Activated B cell treated with CpG ODN at 0.5 μM for 24 hours (primary cell): ENCODE measurements at regions of chr5 and their contacts with region 1.

Region 1: DNA sequence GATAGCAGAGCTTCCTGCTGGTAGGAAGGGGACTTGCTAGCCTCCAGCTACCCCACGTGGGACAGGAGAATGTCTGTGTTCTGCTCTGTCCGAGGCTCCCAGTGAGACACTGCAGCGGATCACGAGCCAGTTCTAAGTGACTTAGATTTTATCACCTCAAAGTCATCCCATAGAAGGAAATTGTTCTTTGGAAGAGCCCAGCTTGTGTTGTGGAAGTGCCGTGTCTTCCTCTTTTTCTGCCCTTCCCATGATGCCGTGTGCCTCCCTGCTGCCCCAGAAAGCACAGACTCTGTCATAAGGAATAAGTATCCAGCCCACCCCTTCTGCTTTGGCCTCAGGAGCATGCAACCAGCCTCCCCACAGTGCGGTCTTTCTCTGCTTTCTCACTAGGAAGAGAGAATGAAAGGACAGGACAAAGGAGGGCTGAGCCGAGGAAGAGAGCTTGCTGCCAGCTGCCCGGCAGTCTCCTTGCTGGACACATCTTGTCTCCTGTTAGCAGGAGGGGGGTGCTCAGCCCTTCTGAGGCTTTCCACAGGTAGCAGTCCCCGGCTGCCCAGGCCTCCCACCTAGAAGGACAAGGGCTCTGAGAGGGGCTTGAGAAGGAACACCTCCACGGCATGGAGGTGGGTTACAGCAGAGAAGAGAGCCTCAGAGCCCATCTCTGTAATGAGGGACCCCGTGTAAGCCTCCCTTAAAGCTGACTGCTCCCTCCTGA is 35.7 kb downstream of the RUFY1 start:
- DNase-seq: no peak
- ATAC-seq: no peak
- H3K4me3 Mint-ChIP-seq: no peak overlapping the region
- H3K27ac Mint-ChIP-seq: no peak overlapping the region
- H3K4me1 Mint-ChIP-seq: no peaks in the 10 kb centered on the region
- H3K27me3 Mint-ChIP-seq: no peaks in the 10 kb centered on the region
- CTCF ChIP-seq: no peak

Region 2: GRCh38 chr5:179475208-179475751 is 110.8 kb before region 1 on chr5:
- CTCF ChIA-PET with region 1: no interaction called
- POLR2A ChIA-PET with region 1: no interaction called
- intact Hi-C with region 1: no loop called
- DNase-seq: no peak
- ATAC-seq: no peak
- H3K4me3 Mint-ChIP-seq: no peak overlapping the region
- H3K27ac Mint-ChIP-seq: no peak overlapping the region
- H3K4me1 Mint-ChIP-seq: no peaks in the 10 kb centered on the region
- H3K27me3 Mint-ChIP-seq: peaks cover 6% of the 10 kb centered on the region
- CTCF ChIP-seq: no peak

Region 3: DNA sequence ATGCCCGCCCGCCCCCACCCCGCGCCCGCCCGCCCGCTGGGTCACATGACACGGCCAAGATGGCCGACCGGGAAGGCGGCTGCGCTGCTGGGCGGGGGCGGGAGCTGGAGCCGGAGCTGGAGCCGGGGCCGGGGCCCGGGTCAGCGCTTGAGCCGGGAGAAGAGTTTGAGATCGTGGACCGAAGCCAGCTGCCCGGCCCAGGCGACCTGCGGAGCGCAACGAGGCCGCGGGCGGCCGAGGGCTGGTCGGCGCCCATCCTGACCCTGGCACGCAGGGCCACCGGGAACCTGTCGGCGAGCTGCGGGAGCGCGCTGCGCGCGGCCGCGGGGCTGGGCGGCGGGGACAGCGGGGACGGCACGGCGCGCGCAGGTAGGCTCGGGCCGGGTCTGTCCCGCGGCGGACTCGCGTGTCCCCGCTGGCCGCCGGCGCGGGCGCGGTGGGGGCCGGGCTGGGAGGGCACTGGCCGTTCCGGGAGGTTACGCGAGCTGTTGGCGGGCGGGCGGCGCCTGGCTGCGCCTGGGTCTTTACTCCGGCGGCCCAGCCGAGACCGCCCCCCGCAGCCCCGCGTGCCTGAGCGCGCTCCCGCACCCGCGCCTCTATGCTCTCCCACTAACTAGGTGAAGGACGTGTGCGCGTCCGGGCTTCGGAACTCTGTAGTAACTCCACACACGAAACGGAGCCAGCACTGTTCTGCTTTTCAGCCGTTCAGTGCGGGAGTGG is 35.4 kb before region 1 on chr5 and contains the start of gene RUFY1:
- CTCF ChIA-PET with region 1: no interaction called
- POLR2A ChIA-PET with region 1: no interaction called
- intact Hi-C with region 1: loop called (anchors 2 kb)
- DNase-seq: peak; percentile 91
- ATAC-seq: peak; percentile 70
- H3K4me3 Mint-ChIP-seq: peak within 1 kb of the TSS; percentile 97
- H3K27ac Mint-ChIP-seq: peak within 1 kb of the TSS; percentile 100
- H3K4me1 Mint-ChIP-seq: peaks cover 60% of the 10 kb centered on the region
- H3K27me3 Mint-ChIP-seq: no peaks in the 10 kb centered on the region
- CTCF ChIP-seq: no peak
- total RNA-seq, gene RUFY1: 83.0 and 95.8 TPM in 2 replicates